ENCODE measurements at regions of chr13 and their contacts with region 1.

Region 1: GRCh38 chr13:110225609-110226562 is 81.1 kb downstream of the COL4A1 start:
- DNase-seq: no peak
- H3K4me3 Mint-ChIP-seq: no peak overlapping the region
- H3K27ac Mint-ChIP-seq: no peak overlapping the region
- H3K4me1 Mint-ChIP-seq: no peaks in the 10 kb centered on the region
- H3K27me3 Mint-ChIP-seq: peaks cover 23% of the 10 kb centered on the region

Region 2: DNA sequence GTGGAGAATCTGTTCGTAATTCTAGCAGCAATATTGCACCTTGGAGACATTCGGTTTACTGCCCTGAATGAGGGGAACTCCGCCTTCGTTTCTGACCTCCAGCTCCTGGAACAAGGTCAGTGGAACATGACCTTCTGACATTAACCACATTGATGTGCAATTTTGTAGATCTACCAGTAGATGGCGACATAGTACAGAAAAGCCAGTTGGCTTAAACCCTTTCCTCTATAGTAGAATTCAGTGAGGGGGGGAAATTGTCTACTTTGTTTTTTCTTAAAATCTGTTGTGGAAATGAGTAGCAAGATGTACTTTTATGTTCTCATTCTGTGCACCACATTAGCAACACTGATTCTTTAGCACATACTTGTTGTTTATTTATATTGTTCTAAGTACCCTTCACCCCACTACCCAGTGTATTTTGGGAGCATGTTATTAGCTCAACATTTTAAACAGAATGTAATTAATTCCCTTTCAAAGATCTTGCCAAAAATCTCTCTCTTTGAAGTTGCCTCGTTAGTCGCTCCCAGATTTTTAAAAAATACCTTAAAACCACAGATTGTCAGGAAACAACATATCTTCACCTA is 1264.3 kb before region 1 on chr13:
- intact Hi-C with region 1: loop called (anchors 10 kb)
- DNase-seq: no peak
- H3K4me3 Mint-ChIP-seq: no peak overlapping the region
- H3K27ac Mint-ChIP-seq: no peak overlapping the region
- H3K4me1 Mint-ChIP-seq: peaks cover 4% of the 10 kb centered on the region
- H3K27me3 Mint-ChIP-seq: peaks cover 4% of the 10 kb centered on the region

Region 3: GRCh38 chr13:110412132-110412914 is 186.4 kb after region 1 on chr13:
- intact Hi-C with region 1: loop called (anchors 1 kb)
- DNase-seq: peak; percentile 52
- H3K4me3 Mint-ChIP-seq: no peak overlapping the region
- H3K27ac Mint-ChIP-seq: peak overlapping the region; percentile 35
- H3K4me1 Mint-ChIP-seq: peaks cover 9% of the 10 kb centered on the region
- H3K27me3 Mint-ChIP-seq: peaks cover 45% of the 10 kb centered on the region

Region 4: GRCh38 chr13:110444226-110444653 is 218.4 kb after region 1 on chr13:
- intact Hi-C with region 1: loop called (anchors 1 kb)
- DNase-seq: no peak
- H3K4me3 Mint-ChIP-seq: no peak overlapping the region
- H3K27ac Mint-ChIP-seq: no peak overlapping the region
- H3K4me1 Mint-ChIP-seq: no peaks in the 10 kb centered on the region
- H3K27me3 Mint-ChIP-seq: peaks cover 25% of the 10 kb centered on the region

Region 5: GRCh38 chr13:110455941-110456340 is 230.1 kb after region 1 on chr13:
- intact Hi-C with region 1: loop called (anchors 1 kb)
- DNase-seq: peak; percentile 51
- H3K4me3 Mint-ChIP-seq: peak overlapping the region; percentile 7
- H3K27ac Mint-ChIP-seq: no peak overlapping the region
- H3K4me1 Mint-ChIP-seq: peaks cover 6% of the 10 kb centered on the region
- H3K27me3 Mint-ChIP-seq: peaks cover 16% of the 10 kb centered on the region

Region 6: GRCh38 chr13:110593430-110594130 is 367.7 kb after region 1 on chr13:
- intact Hi-C with region 1: loop called (anchors 1 kb)
- DNase-seq: no peak
- H3K4me3 Mint-ChIP-seq: no peak overlapping the region
- H3K27ac Mint-ChIP-seq: no peak overlapping the region
- H3K4me1 Mint-ChIP-seq: no peaks in the 10 kb centered on the region
- H3K27me3 Mint-ChIP-seq: peaks cover 12% of the 10 kb centered on the region

Region 7: DNA sequence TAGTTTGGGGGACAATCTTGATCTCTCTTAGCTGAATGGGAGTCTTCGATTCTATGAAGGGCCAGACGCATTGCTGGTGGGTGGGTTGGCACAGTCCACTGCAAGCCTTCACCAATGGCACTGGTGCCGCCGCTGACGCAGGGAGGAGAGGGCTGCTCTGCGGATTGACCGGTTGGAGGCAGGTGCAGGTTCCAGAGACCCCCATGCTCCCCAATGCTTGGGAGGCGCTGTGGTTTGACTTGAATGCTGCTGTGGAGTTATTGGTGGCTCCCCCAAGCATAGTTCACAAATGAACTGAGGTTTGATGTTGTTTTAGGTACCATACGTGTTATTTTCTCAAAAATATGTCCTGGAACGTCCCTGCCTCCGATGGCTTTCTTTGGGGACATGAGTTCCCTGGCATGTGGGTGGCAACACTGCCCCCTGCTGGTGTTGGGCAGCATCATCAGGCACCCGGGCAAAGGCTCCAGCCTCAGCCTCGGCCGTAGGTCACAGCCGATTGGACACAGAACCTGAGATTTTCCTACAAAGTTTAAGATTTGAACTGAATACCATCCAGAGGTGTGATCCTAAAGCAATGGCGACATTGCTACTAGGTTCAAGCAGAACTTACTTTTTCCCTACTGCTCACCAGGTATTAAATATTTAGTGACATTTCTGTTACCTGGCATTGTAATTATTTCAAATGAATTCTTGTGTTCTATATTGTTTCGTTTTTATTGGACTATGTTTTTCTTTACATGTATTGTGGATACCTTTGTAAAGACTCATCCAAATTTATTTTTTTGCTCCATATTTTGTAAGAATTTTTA is 593.5 kb after region 1 on chr13:
- intact Hi-C with region 1: loop called (anchors 1 kb)
- DNase-seq: peak; percentile 61
- H3K4me3 Mint-ChIP-seq: no peak overlapping the region
- H3K27ac Mint-ChIP-seq: no peak overlapping the region
- H3K4me1 Mint-ChIP-seq: peaks cover 8% of the 10 kb centered on the region
- H3K27me3 Mint-ChIP-seq: peaks cover 16% of the 10 kb centered on the region